CD8-positive, alpha-beta T cell (primary cell): ENCODE measurements at regions of chr11 and their contacts with region 1.

Region 1: GRCh38 chr11:118956094-118956846 is at the start of gene UPK2:
- DNase-seq: peak; percentile 80 to 94 (median 88)
- ATAC-seq: peak; percentile 99
- H3K4me3 ChIP-seq: no peak within 1 kb of the TSS
- H3K4me3 Mint-ChIP-seq: no peak within 1 kb of the TSS
- H3K27ac ChIP-seq: no peak within 1 kb of the TSS
- H3K27ac Mint-ChIP-seq: peak within 1 kb of the TSS; percentile 35
- H3K4me1 ChIP-seq: peaks cover 7% of the 10 kb centered on the region
- H3K4me1 Mint-ChIP-seq: peaks cover 6% of the 10 kb centered on the region
- H3K27me3 ChIP-seq: no peaks in the 10 kb centered on the region
- H3K27me3 Mint-ChIP-seq: peaks cover 2% of the 10 kb centered on the region
- CTCF ChIP-seq: peak; percentile 82
- total RNA-seq, gene UPK2: not detected

Region 2: GRCh38 chr11:118592616-118593367 is 363.5 kb before region 1 on chr11:
- CTCF ChIA-PET with region 1: interaction called, 6 read pairs
- POLR2A ChIA-PET with region 1: no interaction called
- intact Hi-C with region 1: loop called in 1 of 2 experiments (anchors 1 kb)
- DNase-seq: no peak
- ATAC-seq: no peak
- H3K4me3 ChIP-seq: no peak overlapping the region
- H3K4me3 Mint-ChIP-seq: no peak overlapping the region
- H3K27ac ChIP-seq: no peak overlapping the region
- H3K27ac Mint-ChIP-seq: peak overlapping the region; percentile 18
- H3K4me1 ChIP-seq: peaks cover 5% of the 10 kb centered on the region
- H3K4me1 Mint-ChIP-seq: peaks cover 18% of the 10 kb centered on the region
- H3K27me3 ChIP-seq: no peaks in the 10 kb centered on the region
- H3K27me3 Mint-ChIP-seq: no peaks in the 10 kb centered on the region
- CTCF ChIP-seq: no peak

Region 3: GRCh38 chr11:118610804-118611795 is 345.2 kb before region 1 on chr11:
- CTCF ChIA-PET with region 1: interaction called, 5 read pairs
- POLR2A ChIA-PET with region 1: no interaction called
- intact Hi-C with region 1: loop called in 1 of 2 experiments (anchors 10 kb)
- DNase-seq: peak; percentile 64 to 91 (median 85)
- ATAC-seq: peak; percentile 34
- H3K4me3 ChIP-seq: peak overlapping the region; percentile 40 to 61
- H3K4me3 Mint-ChIP-seq: peak overlapping the region; percentile 78
- H3K27ac ChIP-seq: no peak overlapping the region
- H3K27ac Mint-ChIP-seq: no peak overlapping the region
- H3K4me1 ChIP-seq: peaks cover 28% of the 10 kb centered on the region
- H3K4me1 Mint-ChIP-seq: peaks cover 25% of the 10 kb centered on the region
- H3K27me3 ChIP-seq: peaks cover 0 to 13% of the 10 kb centered on the region in 2 experiments
- H3K27me3 Mint-ChIP-seq: no peaks in the 10 kb centered on the region
- CTCF ChIP-seq: peak; percentile 85

Region 4: DNA sequence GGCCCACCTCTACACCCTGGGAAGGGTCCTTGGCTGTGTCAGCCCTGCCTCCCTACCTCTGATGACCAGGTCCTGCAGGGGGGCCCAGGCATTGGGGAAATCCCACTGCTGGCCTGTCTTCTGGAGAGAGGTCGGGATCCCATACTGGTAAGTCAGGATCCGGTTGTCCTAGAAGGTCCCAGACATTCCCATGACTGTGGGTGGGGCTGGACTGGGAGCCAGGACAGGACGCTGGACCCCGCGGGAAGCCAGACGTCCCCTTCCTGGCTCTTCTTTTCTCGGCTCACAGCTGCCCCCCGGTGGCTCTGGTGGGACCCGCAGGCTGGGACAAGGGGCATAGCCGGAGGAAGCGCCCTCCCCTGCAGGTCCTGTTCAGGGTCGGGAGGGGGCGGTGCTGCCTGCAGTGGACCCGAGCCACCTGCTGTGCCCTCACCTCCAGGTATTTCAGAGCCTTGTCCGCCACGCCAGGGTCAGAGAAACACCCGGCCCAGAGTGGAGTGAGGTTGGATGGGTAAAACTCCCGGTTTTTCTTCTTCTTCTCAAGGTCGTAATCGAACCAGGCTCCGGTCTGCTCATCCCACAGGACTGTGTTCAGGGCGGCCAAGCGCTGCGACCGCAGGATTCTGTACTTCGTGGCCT is 296.8 kb before region 1 on chr11:
- CTCF ChIA-PET with region 1: interaction called, 24 read pairs
- POLR2A ChIA-PET with region 1: no interaction called
- intact Hi-C with region 1: loop called (anchors 1 kb)
- DNase-seq: peak; percentile 80 to 92 (median 89)
- ATAC-seq: peak; percentile 100
- H3K4me3 ChIP-seq: no peak overlapping the region
- H3K4me3 Mint-ChIP-seq: no peak overlapping the region
- H3K27ac ChIP-seq: no peak overlapping the region
- H3K27ac Mint-ChIP-seq: no peak overlapping the region
- H3K4me1 ChIP-seq: peaks cover 12% of the 10 kb centered on the region
- H3K4me1 Mint-ChIP-seq: peaks cover 7% of the 10 kb centered on the region
- H3K27me3 ChIP-seq: no peaks in the 10 kb centered on the region
- H3K27me3 Mint-ChIP-seq: peaks cover 3% of the 10 kb centered on the region
- CTCF ChIP-seq: peak; percentile 99

Region 5: GRCh38 chr11:118907051-118908042 is 48.9 kb before region 1 on chr11:
- CTCF ChIA-PET with region 1: interaction called, 19 read pairs
- POLR2A ChIA-PET with region 1: interaction called, 4 read pairs
- intact Hi-C with region 1: loop called (anchors 1 kb)
- DNase-seq: peak; percentile 79 to 94 (median 87)
- ATAC-seq: peak; percentile 41
- H3K4me3 ChIP-seq: no peak overlapping the region
- H3K4me3 Mint-ChIP-seq: peak overlapping the region; percentile 53
- H3K27ac ChIP-seq: peak overlapping the region; percentile 2 to 61
- H3K27ac Mint-ChIP-seq: peak overlapping the region; percentile 92
- H3K4me1 ChIP-seq: peaks cover 58% of the 10 kb centered on the region
- H3K4me1 Mint-ChIP-seq: peaks cover 58% of the 10 kb centered on the region
- H3K27me3 ChIP-seq: no peaks in the 10 kb centered on the region
- H3K27me3 Mint-ChIP-seq: no peaks in the 10 kb centered on the region
- CTCF ChIP-seq: peak; percentile 91

Region 6: DNA sequence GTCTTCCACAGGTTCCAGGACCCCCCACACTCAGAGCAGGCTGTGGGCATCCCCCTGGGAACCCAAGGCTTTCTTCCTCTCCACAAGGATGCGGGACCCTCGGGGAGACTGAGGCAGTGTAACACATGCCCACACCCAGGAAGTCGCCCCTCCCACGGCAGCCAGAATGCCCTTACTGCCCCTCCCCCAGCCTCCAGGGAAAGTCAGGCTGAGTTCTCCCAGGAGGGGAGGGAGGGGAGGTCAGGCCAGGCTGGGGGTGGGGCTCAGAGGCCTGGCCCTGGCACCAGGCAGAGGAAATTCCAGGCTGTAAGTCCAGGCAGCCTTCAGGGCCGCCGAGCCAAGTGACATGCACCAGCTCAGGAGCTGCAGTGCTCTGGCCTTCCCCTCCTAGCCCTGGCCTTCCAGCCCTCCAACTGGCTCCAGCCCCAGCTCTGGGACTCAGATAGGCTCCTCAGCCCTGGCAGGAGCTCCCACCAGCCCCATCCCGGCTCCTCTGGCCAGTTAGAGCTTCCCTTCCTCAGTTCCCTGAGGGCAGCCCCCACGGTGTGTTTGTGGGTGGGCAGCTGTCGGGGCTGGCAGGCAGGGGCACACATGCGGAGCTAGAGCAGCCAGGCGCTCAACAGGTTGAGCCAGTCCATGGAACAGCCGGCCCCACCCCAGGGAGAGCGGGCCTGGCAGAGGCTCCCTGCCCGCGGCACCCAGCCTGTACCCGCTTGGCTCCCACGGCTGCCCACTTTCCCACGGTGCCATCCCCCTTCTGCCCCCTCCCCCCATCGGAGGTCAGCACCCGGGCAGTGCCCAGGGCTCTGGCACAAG is 34.1 kb before region 1 on chr11:
- CTCF ChIA-PET with region 1: interaction called, 10 read pairs
- POLR2A ChIA-PET with region 1: interaction called, 8 read pairs
- intact Hi-C with region 1: no loop called
- DNase-seq: peak in 2 of 9 experiments; percentile 21 to 42
- ATAC-seq: no peak
- H3K4me3 ChIP-seq: peak overlapping the region; percentile 92 to 95
- H3K4me3 Mint-ChIP-seq: peak overlapping the region; percentile 100
- H3K27ac ChIP-seq: peak overlapping the region; percentile 88 to 95
- H3K27ac Mint-ChIP-seq: peak overlapping the region; percentile 99
- H3K4me1 ChIP-seq: peaks cover 47% of the 10 kb centered on the region
- H3K4me1 Mint-ChIP-seq: peaks cover 56% of the 10 kb centered on the region
- H3K27me3 ChIP-seq: no peaks in the 10 kb centered on the region
- H3K27me3 Mint-ChIP-seq: no peaks in the 10 kb centered on the region
- CTCF ChIP-seq: no peak

Region 7: GRCh38 chr11:118939953-118940598 is 16.2 kb before region 1 on chr11:
- CTCF ChIA-PET with region 1: interaction called, 11 read pairs
- POLR2A ChIA-PET with region 1: no interaction called
- intact Hi-C with region 1: no loop called
- DNase-seq: peak in 6 of 9 experiments; percentile 39 to 74 (median 60)
- ATAC-seq: peak; percentile 94
- H3K4me3 ChIP-seq: peak overlapping the region in 1 of 2 experiments; percentile 33
- H3K4me3 Mint-ChIP-seq: peak overlapping the region; percentile 49
- H3K27ac ChIP-seq: no peak overlapping the region
- H3K27ac Mint-ChIP-seq: no peak overlapping the region
- H3K4me1 ChIP-seq: peaks cover 33% of the 10 kb centered on the region
- H3K4me1 Mint-ChIP-seq: peaks cover 47% of the 10 kb centered on the region
- H3K27me3 ChIP-seq: no peaks in the 10 kb centered on the region
- H3K27me3 Mint-ChIP-seq: no peaks in the 10 kb centered on the region
- CTCF ChIP-seq: no peak